Breast epithelium (tissue), 4 donors: ENCODE measurements at regions of chr2 and their contacts with region 1.

Region 1: DNA sequence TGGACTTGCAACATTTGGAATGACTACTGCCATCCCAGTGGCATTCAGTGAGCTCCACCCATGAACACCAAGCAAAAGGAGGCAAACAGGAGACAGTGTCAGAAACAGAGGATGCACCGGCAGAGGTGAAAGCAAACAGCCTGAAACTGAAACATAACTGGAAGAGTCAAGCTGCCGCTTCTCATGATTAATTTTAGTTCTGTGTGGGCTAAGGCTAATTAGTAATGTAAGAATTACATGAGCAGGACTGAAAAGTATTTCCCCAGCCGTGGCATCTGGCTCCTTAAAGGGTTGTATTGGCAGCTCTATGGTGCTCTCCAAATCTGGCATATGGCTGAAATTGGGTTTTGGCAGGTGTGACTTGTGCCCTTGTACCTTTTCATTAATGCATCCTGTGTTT is 1108.1 kb downstream of the TSN start:
- DNase-seq: no peak
- H3K4me3 ChIP-seq: no peak overlapping the region
- H3K27ac ChIP-seq: no peak overlapping the region
- H3K4me1 ChIP-seq: no peaks in the 10 kb centered on the region
- H3K27me3 ChIP-seq: no peaks in the 10 kb centered on the region
- CTCF ChIP-seq: no peak
- POLR2A ChIP-seq: no peak

Region 2: DNA sequence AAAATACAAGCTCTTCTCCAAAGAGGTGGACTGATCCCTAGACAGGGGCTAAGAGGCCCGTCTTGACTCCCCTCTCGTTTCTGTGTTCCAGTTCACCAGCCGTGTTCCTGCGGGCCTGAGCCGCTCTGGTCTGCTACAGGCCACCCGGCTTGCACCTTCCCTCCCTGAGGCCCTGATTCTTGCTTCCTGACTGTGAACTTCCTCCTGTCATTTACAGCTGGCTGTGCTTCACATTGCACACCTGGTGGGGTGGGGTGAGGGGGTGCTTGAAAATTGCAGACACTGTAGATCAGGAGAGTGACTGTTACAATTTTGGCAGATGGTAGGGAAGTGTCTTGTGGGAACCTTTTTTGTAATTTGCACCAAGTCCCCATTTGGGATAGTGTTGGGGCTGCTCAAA is 1043.7 kb before region 1 on chr2:
- intact Hi-C with region 1: loop called (anchors 5 kb)
- DNase-seq: no peak
- H3K4me3 ChIP-seq: no peak overlapping the region
- H3K27ac ChIP-seq: no peak overlapping the region
- H3K4me1 ChIP-seq: no peaks in the 10 kb centered on the region
- H3K27me3 ChIP-seq: no peaks in the 10 kb centered on the region
- CTCF ChIP-seq: no peak
- POLR2A ChIP-seq: no peak

Region 3: DNA sequence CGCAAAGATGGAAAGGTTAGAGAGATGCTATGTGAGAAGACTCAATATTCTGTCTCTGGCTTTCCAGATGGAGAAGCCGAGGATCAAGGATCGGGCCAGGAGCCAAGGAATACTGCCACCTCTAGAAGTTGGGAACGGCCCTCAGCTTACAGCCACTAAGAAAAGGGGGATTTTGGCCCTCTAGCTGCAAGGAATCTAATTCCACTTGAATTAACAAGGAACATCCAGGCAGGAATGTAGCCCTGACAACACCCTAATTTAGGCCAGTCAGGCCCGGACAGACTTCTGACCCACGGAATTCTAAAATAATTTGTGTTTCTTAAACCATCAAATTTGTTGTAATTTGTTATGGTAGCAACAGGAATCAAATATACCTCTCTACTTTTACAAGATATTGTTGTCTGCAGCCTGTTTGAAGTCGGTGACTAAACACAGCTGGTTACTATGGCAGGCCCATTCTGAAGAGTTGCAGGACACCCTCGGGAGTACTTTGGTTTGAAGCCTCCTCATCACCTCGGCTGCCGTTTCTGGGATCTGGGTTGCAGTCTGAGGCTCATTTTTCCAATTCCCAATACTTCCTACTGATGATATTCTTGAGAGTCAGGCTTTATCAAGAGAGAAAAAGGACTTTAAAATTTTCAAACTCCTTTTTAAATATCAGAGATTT is 23.1 kb after region 1 on chr2:
- intact Hi-C with region 1: no loop called
- DNase-seq: no peak
- H3K4me3 ChIP-seq: no peak overlapping the region
- H3K27ac ChIP-seq: no peak overlapping the region
- H3K4me1 ChIP-seq: no peaks in the 10 kb centered on the region
- H3K27me3 ChIP-seq: no peaks in the 10 kb centered on the region
- CTCF ChIP-seq: no peak
- POLR2A ChIP-seq: no peak

Region 4: GRCh38 chr2:122905431-122905830 is 41.9 kb after region 1 on chr2:
- intact Hi-C with region 1: no loop called
- DNase-seq: no peak
- H3K4me3 ChIP-seq: no peak overlapping the region
- H3K27ac ChIP-seq: no peak overlapping the region
- H3K4me1 ChIP-seq: no peaks in the 10 kb centered on the region
- H3K27me3 ChIP-seq: no peaks in the 10 kb centered on the region
- CTCF ChIP-seq: no peak
- POLR2A ChIP-seq: no peak

Region 5: DNA sequence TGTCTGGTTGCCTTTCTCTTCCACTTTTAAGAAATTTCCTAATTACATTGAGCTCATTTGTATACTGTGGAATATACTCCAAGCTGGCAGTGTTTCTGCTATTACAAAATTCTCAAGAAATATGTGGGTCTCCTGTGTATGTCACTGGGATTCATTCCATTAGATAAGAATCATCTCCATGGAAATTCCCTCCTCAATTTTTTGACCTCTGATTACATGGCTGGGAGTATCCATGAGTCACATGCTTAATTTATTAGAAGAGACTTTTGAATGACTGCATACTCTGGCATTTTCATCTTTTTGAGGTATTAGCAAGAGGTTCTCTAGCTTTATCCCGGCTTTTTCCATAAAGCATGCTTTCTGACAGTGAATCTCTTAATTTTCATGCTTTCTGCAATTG is 496.1 kb after region 1 on chr2:
- intact Hi-C with region 1: loop called (anchors 5 kb)
- DNase-seq: no peak
- H3K4me3 ChIP-seq: no peak overlapping the region
- H3K27ac ChIP-seq: no peak overlapping the region
- H3K4me1 ChIP-seq: no peaks in the 10 kb centered on the region
- H3K27me3 ChIP-seq: no peaks in the 10 kb centered on the region
- CTCF ChIP-seq: no peak
- POLR2A ChIP-seq: no peak